ENCODE measurements at regions of chr10 and their contacts with region 1.

Region 1: DNA sequence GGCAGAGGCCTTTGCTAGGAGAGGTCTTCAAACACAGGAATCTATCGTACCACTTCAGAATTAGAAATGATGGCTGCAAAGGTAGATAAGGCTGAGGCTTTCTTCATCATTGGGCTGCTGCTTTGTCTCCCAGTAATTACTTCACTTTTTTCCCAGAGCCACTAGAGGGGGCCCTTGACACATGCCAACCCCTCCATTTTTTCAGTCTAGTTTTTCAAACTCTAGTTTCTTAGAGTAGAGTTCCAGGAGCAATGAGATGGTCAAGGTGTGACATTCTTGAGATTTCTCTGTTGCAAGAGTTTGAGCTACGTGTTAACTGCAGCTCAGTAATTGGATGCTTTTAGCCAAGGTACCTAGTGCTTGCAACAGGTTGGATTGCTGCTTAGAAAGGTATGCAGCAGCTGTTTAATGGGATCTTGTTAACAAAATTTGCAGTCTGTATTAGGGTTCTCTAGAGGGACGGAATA is 33.8 kb upstream of the RBM20 start:
- DNase-seq: peak; percentile 70
- ATAC-seq: peak; percentile 66
- H3K4me3 ChIP-seq: no peak overlapping the region
- H3K4me3 Mint-ChIP-seq: no peak overlapping the region
- H3K27ac ChIP-seq: no peak overlapping the region
- H3K27ac Mint-ChIP-seq: no peak overlapping the region
- H3K4me1 ChIP-seq: peaks cover 4 to 6% of the 10 kb centered on the region in 2 donors
- H3K4me1 Mint-ChIP-seq: peaks cover 18% of the 10 kb centered on the region
- H3K27me3 ChIP-seq: no peaks in the 10 kb centered on the region
- H3K27me3 Mint-ChIP-seq: no peaks in the 10 kb centered on the region
- CTCF ChIP-seq: peak; percentile 91

Region 2: DNA sequence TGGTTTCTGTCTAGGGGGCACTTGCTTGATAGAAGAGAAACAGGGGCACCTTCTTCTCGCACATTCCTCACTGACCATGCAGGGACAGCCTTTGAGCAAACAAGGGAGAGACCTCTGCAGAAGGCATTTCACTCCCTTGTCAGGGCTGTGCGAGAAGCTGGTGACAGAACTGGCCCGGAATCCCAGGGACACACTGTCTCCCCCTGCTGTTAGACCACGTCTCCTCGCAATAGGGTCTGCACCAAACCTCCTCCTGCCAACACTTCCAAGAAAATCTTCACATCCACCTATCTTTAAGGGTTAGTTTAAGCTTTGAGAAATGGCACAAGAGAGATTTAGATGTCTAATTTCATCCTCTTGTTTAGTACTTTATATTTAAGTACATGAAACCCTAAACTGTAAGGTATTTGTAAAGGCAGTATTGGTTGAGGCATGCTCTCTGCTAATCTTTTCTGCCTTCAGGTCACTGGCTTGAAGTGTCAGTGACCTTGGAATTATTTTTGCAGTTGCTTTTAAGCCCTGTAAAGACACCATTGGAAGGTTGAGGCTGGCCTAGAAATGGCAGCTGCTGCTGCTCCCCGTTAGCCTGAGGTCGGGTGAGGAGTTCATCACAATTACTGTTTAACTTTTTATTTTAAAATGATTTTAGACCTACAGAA is 70.8 kb after region 1 on chr10:
- CTCF ChIA-PET with region 1: interaction called, 8 read pairs
- POLR2A ChIA-PET with region 1: no interaction called
- intact Hi-C with region 1: loop called (anchors 1 kb)
- DNase-seq: peak; percentile 20
- ATAC-seq: no peak
- H3K4me3 ChIP-seq: no peak overlapping the region
- H3K4me3 Mint-ChIP-seq: no peak overlapping the region
- H3K27ac ChIP-seq: no peak overlapping the region
- H3K27ac Mint-ChIP-seq: no peak overlapping the region
- H3K4me1 ChIP-seq: peaks cover 0 to 4% of the 10 kb centered on the region in 2 donors
- H3K4me1 Mint-ChIP-seq: peaks cover 6% of the 10 kb centered on the region
- H3K27me3 ChIP-seq: no peaks in the 10 kb centered on the region
- H3K27me3 Mint-ChIP-seq: peaks cover 39% of the 10 kb centered on the region
- CTCF ChIP-seq: peak; percentile 26

Region 3: GRCh38 chr10:110893559-110894179 is 283.3 kb after region 1 on chr10:
- CTCF ChIA-PET with region 1: interaction called, 7 read pairs
- POLR2A ChIA-PET with region 1: no interaction called
- intact Hi-C with region 1: loop called (anchors 1 kb)
- DNase-seq: peak; percentile 74
- ATAC-seq: peak; percentile 79
- H3K4me3 ChIP-seq: no peak overlapping the region
- H3K4me3 Mint-ChIP-seq: no peak overlapping the region
- H3K27ac ChIP-seq: peak overlapping the region in 1 of 2 donors; percentile 21
- H3K27ac Mint-ChIP-seq: no peak overlapping the region
- H3K4me1 ChIP-seq: peaks cover 0 to 7% of the 10 kb centered on the region in 2 donors
- H3K4me1 Mint-ChIP-seq: peaks cover 24% of the 10 kb centered on the region
- H3K27me3 ChIP-seq: no peaks in the 10 kb centered on the region
- H3K27me3 Mint-ChIP-seq: no peaks in the 10 kb centered on the region
- CTCF ChIP-seq: peak; percentile 79

Region 4: GRCh38 chr10:111598436-111599059 is 988.2 kb after region 1 on chr10:
- CTCF ChIA-PET with region 1: interaction called, 15 read pairs
- POLR2A ChIA-PET with region 1: no interaction called
- intact Hi-C with region 1: no loop called
- DNase-seq: peak; percentile 55
- ATAC-seq: peak; percentile 47
- H3K4me3 ChIP-seq: no peak overlapping the region
- H3K4me3 Mint-ChIP-seq: no peak overlapping the region
- H3K27ac ChIP-seq: no peak overlapping the region
- H3K27ac Mint-ChIP-seq: no peak overlapping the region
- H3K4me1 ChIP-seq: no peaks in the 10 kb centered on the region
- H3K4me1 Mint-ChIP-seq: no peaks in the 10 kb centered on the region
- H3K27me3 ChIP-seq: no peaks in the 10 kb centered on the region
- H3K27me3 Mint-ChIP-seq: peaks cover 15% of the 10 kb centered on the region
- CTCF ChIP-seq: peak; percentile 78

Measured in B cell (primary cell).